ENCODE measurements at regions of chr2 and their contacts with region 1.

Region 1: DNA sequence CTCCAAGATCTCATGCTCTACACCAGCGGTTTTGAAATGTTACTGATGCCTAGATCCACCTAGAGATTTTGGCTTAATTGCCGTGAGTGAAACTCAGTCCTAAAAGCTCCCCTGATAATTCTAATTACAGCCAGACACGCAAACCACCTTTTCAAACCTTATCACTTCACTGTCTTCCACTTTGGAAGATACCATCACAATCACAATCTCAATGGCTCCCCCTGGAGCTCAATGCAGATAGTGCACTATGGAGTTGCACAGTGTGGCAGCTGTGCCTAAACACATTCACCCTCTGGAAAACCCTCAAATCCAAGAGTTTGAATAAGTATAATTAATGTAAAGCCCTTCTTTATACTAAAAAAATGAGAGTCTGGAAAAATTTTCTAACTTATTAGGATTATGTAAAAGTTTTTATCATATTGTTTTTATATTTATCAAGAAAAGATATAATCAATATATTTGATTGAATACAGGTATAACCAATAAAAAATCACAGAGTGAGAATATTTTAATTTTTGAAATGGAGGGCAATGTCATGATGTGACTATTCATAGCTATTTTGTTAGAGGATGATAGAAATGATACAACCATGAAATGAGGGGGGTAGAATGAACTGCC is 102.9 kb upstream of the SLC8A1 start:
- DNase-seq: no peak
- H3K4me3 ChIP-seq: no peak overlapping the region
- H3K27me3 ChIP-seq: no peaks in the 10 kb centered on the region
- CTCF ChIP-seq: peak; percentile 84

Region 2: DNA sequence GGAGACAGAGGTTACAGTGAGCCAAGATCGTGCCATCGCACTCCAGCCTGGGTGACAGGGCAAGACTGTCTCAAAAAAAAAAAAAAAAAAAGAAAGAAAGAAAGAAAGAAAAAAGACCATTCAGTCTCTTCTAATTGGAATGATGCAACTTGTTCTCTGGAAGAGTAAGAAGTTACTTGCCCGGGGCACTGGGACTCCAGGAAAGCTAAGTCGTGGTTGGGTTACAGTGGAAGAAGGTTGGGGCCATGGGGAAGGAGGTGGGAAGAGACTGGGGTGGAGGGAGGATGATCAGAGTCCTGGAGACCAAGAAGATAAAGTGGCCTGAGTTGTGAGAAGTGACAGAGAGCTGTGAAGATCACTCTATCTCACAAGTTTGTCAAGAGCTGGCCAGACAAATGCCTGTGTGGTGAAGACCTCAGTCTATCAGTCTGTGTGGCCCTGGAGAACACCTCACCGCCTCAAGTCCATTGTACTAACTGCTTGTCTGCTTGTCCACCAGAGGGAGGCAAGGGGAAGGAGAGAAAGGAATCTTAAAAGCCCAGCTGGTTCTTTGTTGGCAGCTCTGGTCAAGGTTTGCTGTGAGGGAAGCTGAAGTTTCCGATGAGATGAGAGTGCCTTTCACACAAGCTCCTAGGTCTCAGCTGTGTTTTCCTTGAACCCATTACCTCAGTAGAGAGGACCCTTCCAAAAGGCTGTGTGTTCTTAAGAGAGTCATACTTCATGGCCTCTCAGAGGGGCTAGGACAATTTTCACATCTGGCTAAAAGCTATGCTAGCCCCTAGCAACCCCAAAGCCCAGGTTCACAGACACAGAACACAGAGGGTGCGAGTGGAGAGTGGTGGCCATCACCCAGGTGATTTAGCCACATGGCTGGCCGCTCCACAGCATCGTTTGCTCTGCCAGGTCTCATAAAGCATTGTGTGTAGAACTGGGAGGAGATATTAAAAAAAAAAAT is 961.1 kb before region 1 on chr2:
- CTCF ChIA-PET with region 1: no interaction called
- POLR2A ChIA-PET with region 1: no interaction called
- DNase-seq: peak; percentile 28
- H3K4me3 ChIP-seq: no peak overlapping the region
- H3K27me3 ChIP-seq: no peaks in the 10 kb centered on the region
- CTCF ChIP-seq: peak; percentile 83

Region 3: DNA sequence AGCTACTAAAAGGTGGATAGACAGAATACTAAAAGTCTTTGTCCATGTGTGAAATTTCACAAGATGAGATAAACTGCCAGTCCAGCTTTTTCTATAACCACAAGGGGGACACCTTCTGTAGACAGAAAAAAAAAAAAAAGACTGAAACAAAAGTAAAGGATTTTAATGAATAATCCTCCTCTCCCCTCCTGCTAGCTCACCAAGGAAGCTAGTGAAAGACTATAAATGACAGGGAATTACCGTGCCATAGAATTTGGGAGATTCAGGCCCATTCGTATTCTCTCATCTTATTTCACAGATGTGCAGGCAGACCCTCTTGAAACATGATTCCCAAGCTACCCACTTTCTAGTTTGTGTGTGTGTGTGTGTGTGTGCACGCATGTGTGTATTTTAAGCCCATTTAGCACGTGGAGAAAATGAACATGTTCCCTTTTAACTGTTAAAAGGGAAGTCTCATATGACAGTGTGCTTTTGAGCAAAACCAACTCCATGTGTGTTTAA is 66.6 kb before region 1 on chr2:
- CTCF ChIA-PET with region 1: interaction called, 11 read pairs
- POLR2A ChIA-PET with region 1: no interaction called
- DNase-seq: no peak
- H3K4me3 ChIP-seq: no peak overlapping the region
- H3K27me3 ChIP-seq: no peaks in the 10 kb centered on the region
- CTCF ChIP-seq: peak; percentile 55

Region 4: GRCh38 chr2:40543381-40543780 is 11.4 kb before region 1 on chr2:
- CTCF ChIA-PET with region 1: interaction called, 10 read pairs
- POLR2A ChIA-PET with region 1: no interaction called
- DNase-seq: no peak
- H3K4me3 ChIP-seq: no peak overlapping the region
- H3K27me3 ChIP-seq: no peaks in the 10 kb centered on the region
- CTCF ChIP-seq: no peak

Region 5: DNA sequence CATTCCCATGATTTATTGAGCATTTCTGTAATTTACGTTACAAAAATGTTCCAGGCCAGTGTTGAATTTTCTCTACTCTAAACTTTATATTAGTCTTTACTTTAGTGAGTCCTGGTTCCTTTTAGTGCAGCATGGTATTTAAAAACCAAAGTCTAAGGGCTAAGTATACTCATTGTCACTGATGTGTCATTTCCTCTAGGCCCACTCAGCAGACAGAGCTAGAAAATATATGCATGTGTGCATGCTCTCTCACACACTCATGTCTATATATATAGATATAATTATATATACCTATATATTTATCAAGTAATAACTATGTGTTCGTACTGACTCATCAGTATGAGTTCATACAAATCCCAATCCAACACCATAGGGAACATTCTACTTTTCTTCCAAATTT is 29.7 kb after region 1 on chr2:
- CTCF ChIA-PET with region 1: no interaction called
- POLR2A ChIA-PET with region 1: no interaction called
- DNase-seq: no peak
- H3K4me3 ChIP-seq: no peak overlapping the region
- H3K27me3 ChIP-seq: no peaks in the 10 kb centered on the region
- CTCF ChIP-seq: no peak

Measured in BJ (cell line).